CD8-positive, alpha-beta T cell (primary cell): ENCODE measurements at regions of chr12 and their contacts with region 1.

Region 1: DNA sequence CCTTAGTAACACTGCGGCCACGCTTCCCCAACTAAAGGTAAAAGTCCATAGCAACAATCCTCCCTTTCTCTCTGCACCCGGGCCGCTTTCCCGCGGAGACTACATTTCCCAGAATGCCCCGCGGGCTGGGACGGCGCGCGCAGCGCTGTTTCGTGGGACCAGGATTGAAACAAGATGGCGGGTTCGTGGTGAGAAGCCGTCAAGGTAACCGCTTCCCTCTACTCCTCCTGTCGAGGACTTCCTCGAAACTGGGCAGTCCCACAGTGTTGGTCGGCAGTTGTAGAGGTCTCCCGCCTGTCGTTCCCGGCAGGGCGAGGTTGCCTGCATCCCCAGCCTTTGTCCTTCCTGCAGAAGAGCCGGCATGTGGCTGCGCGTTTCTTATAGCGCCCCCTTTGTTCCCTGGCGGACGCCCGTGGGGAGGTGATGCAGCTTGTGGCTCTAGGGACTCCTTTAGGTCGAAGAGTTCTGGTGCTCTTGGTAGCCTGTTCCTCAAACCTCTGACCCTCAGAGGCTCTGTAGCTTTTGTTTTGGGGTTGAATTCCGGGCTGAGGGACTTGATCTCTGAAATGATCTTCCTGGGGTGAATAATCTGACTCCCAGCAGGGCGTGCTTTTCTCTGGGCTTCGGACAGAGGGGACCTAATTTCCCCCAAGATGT is at the start of gene MRPL42:
- DNase-seq: peak; percentile 88 to 96 (median 91)
- ATAC-seq: peak; percentile 94
- H3K4me3 ChIP-seq: peak within 1 kb of the TSS; percentile 64 to 95
- H3K4me3 Mint-ChIP-seq: peak within 1 kb of the TSS; percentile 93
- H3K27ac ChIP-seq: peak within 1 kb of the TSS; percentile 81 to 88
- H3K27ac Mint-ChIP-seq: peak within 1 kb of the TSS; percentile 95
- H3K4me1 ChIP-seq: peaks cover 15% of the 10 kb centered on the region
- H3K4me1 Mint-ChIP-seq: peaks cover 34% of the 10 kb centered on the region
- H3K27me3 ChIP-seq: no peaks in the 10 kb centered on the region
- H3K27me3 Mint-ChIP-seq: no peaks in the 10 kb centered on the region
- CTCF ChIP-seq: peak; percentile 71
- total RNA-seq, gene MRPL42: 31.6 to 33.2 TPM

Region 2: DNA sequence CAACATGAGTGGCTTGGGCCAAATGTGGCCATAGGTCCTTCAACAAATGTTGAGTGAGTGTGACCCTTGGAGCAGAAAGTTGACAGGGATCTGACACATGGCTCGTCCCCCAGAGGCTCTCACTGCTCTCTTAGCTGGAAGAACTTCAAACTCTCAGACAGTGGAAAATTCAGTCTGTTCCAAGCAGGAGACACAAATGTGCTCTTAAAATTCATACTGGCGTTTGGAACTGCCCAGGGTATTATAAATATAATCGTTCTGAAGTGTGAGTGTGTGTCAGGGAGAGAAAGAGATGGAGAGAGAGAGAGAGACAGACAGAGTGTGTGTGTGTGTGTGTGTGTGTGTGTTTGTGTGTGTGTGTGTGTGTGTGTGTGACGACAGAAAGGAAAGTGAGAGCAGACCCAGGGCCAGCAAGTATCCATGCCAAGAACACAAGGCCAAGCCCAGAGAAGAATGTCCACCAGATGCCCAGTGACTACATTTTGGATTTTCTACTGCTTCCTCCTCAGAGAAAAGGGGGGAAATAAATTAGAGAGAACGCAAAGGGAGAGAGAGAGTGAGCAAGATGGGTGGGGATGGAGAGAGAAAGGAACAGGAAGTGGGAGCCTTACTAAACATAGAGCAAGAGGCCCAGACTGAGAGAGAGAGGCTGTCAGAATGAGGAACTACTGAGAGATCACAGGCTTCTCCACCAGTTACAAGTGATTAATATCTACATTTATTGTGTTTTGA is 283.4 kb before region 1 on chr12:
- CTCF ChIA-PET with region 1: no interaction called
- POLR2A ChIA-PET with region 1: no interaction called
- intact Hi-C with region 1: no loop called
- DNase-seq: peak in 1 of 9 experiments; percentile 20
- ATAC-seq: peak; percentile 38
- H3K4me3 ChIP-seq: no peak overlapping the region
- H3K4me3 Mint-ChIP-seq: no peak overlapping the region
- H3K27ac ChIP-seq: no peak overlapping the region
- H3K27ac Mint-ChIP-seq: no peak overlapping the region
- H3K4me1 ChIP-seq: peaks cover 5% of the 10 kb centered on the region
- H3K4me1 Mint-ChIP-seq: peaks cover 17% of the 10 kb centered on the region
- H3K27me3 ChIP-seq: no peaks in the 10 kb centered on the region
- H3K27me3 Mint-ChIP-seq: no peaks in the 10 kb centered on the region
- CTCF ChIP-seq: no peak

Region 3: GRCh38 chr12:93434256-93434865 is 33.1 kb before region 1 on chr12:
- CTCF ChIA-PET with region 1: interaction called, 8 read pairs
- POLR2A ChIA-PET with region 1: no interaction called
- intact Hi-C with region 1: loop called in 1 of 2 experiments (anchors 5 kb)
- DNase-seq: no peak
- ATAC-seq: no peak
- H3K4me3 ChIP-seq: no peak overlapping the region
- H3K4me3 Mint-ChIP-seq: no peak overlapping the region
- H3K27ac ChIP-seq: no peak overlapping the region
- H3K27ac Mint-ChIP-seq: no peak overlapping the region
- H3K4me1 ChIP-seq: peaks cover 63% of the 10 kb centered on the region
- H3K4me1 Mint-ChIP-seq: peaks cover 80% of the 10 kb centered on the region
- H3K27me3 ChIP-seq: no peaks in the 10 kb centered on the region
- H3K27me3 Mint-ChIP-seq: no peaks in the 10 kb centered on the region
- CTCF ChIP-seq: no peak

Region 4: GRCh38 chr12:93742110-93742934 is 274.8 kb after region 1 on chr12:
- CTCF ChIA-PET with region 1: no interaction called
- POLR2A ChIA-PET with region 1: no interaction called
- intact Hi-C with region 1: no loop called
- DNase-seq: peak; percentile 10 to 72 (median 45)
- ATAC-seq: peak; percentile 87
- H3K4me3 ChIP-seq: peak overlapping the region; percentile 56 to 76
- H3K4me3 Mint-ChIP-seq: peak overlapping the region; percentile 91
- H3K27ac ChIP-seq: peak overlapping the region; percentile 34 to 47
- H3K27ac Mint-ChIP-seq: peak overlapping the region; percentile 79
- H3K4me1 ChIP-seq: peaks cover 8% of the 10 kb centered on the region
- H3K4me1 Mint-ChIP-seq: peaks cover 28% of the 10 kb centered on the region
- H3K27me3 ChIP-seq: no peaks in the 10 kb centered on the region
- H3K27me3 Mint-ChIP-seq: no peaks in the 10 kb centered on the region
- CTCF ChIP-seq: no peak

Region 5: GRCh38 chr12:94459728-94460615 is 992.5 kb after region 1 on chr12 and contains the start of gene CEP83:
- CTCF ChIA-PET with region 1: no interaction called
- POLR2A ChIA-PET with region 1: no interaction called
- intact Hi-C with region 1: loop called in 1 of 2 experiments (anchors 5 kb)
- DNase-seq: peak; percentile 90 to 98 (median 97)
- ATAC-seq: peak; percentile 96
- H3K4me3 ChIP-seq: peak within 1 kb of the TSS; percentile 94 to 96
- H3K4me3 Mint-ChIP-seq: peak within 1 kb of the TSS; percentile 96
- H3K27ac ChIP-seq: peak within 1 kb of the TSS; percentile 91 to 93
- H3K27ac Mint-ChIP-seq: peak within 1 kb of the TSS; percentile 94
- H3K4me1 ChIP-seq: peaks cover 6% of the 10 kb centered on the region
- H3K4me1 Mint-ChIP-seq: peaks cover 33% of the 10 kb centered on the region
- H3K27me3 ChIP-seq: peaks cover 0 to 2% of the 10 kb centered on the region in 2 experiments
- H3K27me3 Mint-ChIP-seq: peaks cover 5% of the 10 kb centered on the region
- CTCF ChIP-seq: no peak
- total RNA-seq, gene CEP83: 9.7 to 11.2 TPM